Heart right ventricle (tissue), 16 donors: ENCODE measurements at regions of chr6 and their contacts with region 1.

Region 1: GRCh38 chr6:35857853-35858252 is 52.7 kb downstream of the LHFPL5 start:
- DNase-seq: no peak
- ATAC-seq: no peak
- H3K4me3 ChIP-seq: no peak overlapping the region
- H3K27ac ChIP-seq: no peak overlapping the region
- H3K4me1 ChIP-seq: no peaks in the 10 kb centered on the region
- H3K27me3 ChIP-seq: no peaks in the 10 kb centered on the region
- CTCF ChIP-seq: no peak

Region 2: DNA sequence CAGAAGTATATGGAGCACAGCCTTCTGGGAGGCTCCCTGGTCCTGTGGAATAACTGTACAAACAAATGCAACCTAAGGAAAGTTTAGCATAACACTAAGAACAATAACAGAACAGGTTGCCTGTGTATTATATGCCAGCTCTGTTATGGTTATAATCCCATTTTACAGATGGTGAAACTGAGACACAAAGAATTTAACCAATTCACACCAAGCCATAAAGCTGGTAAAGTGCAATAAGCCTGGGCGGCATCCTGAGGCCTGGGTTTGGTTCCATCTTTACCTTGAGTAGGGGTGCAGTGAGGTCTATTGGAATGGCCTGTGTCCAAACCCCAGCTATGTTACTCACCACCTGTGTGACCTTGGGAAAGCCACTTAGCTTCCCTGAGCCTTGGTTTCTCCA is 1406.7 kb before region 1 on chr6:
- intact Hi-C with region 1: loop called in 1 of 10 experiments (anchors 5 kb)
- DNase-seq: no peak
- ATAC-seq: no peak
- H3K4me3 ChIP-seq: no peak overlapping the region
- H3K27ac ChIP-seq: no peak overlapping the region
- H3K4me1 ChIP-seq: no peaks in the 10 kb centered on the region
- H3K27me3 ChIP-seq: no peaks in the 10 kb centered on the region
- CTCF ChIP-seq: no peak

Region 3: GRCh38 chr6:35804996-35805736 is 52.7 kb before region 1 on chr6 and contains the start of gene LHFPL5:
- intact Hi-C with region 1: loop called in 1 of 10 experiments (anchors 2 kb)
- DNase-seq: peak; percentile 16 to 48
- ATAC-seq: peak; percentile 76 to 93 (median 87)
- H3K4me3 ChIP-seq: peak within 1 kb of the TSS in 8 of 10 donors; percentile 12 to 44 (median 30)
- H3K27ac ChIP-seq: no peak within 1 kb of the TSS
- H3K4me1 ChIP-seq: peaks cover 0 to 5% (median 0%) of the 10 kb centered on the region in 9 donors
- H3K27me3 ChIP-seq: peaks cover 0 to 55% (median 21%) of the 10 kb centered on the region in 7 donors
- CTCF ChIP-seq: no peak
- total RNA-seq, gene LHFPL5: not detected